ENCODE measurements at regions of chr13 and their contacts with region 1.

Region 1: DNA sequence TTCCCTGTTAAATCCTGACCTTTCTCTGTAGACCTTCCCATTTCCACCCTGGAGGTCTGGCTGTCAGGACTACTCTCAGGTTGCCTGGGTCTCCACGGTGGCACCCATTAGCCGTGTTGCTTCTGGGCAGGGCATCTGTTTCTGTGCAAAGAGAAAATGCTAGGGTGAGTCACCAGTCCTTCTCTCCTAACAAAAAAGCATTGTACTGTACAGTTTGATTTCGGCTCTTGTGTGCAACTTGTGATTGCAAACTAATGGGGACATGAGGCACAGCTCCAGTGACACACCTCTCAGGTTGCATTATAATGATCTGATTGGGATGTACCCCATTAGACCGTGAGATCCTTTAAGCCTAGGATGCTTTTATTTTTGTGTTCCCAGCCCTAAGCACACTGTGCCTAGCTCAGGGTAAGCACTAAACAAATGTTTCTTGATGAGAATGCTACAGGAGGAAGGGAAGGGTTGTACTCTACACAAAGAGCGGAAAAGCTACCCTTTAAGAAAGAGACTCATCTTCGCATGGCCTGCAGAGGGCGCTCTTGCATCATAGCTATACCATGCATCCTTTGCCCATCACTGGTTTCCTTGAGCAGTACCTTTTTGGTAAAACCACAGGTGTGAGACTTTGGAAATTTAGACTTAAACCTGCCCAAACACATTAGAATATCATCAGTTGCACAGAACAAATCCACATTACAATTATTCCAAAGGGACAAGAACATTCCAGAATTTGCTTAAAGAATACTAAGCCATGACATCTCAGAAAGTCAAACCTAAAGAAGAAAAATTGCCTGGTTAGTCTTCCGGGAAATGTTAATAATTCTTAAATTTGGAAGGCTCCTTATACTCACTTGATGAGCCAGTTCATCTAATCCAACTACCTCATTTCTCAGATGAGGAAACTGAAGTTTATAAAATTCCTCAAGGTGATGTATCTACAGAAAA is 20.3 kb upstream of the TRIM13 start:
- DNase-seq: peak; percentile 79
- H3K4me3 ChIP-seq: no peak overlapping the region
- H3K27ac ChIP-seq: no peak overlapping the region
- H3K4me1 ChIP-seq: no peaks in the 10 kb centered on the region
- H3K27me3 ChIP-seq: no peaks in the 10 kb centered on the region
- CTCF ChIP-seq: peak; percentile 84

Region 2: DNA sequence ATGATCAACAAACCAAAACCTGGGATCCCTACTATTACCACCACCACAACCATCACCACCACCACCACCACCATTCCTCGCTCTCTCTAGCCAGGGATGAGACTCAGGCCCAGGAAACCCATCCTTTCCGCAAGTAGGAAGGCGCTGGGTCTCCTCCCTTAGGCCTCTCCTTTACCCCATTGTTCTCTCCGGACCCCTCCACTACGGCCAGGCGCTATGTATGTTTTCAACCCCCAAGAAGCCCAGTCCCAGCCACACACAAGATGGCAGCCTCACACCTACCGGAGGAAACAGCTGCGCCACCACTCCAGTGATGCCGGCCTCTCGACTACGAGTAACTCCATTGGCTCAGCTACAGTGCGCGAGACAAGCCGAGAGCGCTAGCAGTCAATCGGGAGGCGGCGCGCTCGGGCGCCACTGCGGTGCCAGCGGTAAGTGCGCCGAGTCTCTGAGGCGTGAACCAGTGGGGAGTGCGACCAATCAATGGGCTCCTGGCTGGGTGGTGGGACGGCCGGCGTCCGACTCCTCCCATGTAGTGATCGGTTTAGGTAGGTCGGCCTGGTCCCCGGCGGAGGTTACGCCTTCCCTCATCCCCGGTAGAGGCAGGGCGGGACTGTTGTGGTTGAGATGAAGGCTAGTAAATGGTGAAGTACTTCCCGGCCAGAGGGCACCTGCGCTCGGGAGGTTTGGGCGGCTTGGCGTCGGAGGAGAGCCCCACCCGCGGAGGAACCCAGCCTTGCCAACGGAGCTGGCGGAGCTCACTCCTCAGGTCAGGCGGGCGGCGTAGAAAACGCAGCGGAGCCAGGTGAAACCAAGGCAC is 532.7 kb before region 1 on chr13 and contains the starts of genes CAB39L and SETDB2:
- intact Hi-C with region 1: no loop called
- DNase-seq: peak; percentile 99
- H3K4me3 ChIP-seq: peak within 1 kb of the TSS; percentile 63
- H3K27ac ChIP-seq: peak within 1 kb of the TSS; percentile 98
- H3K4me1 ChIP-seq: no peaks in the 10 kb centered on the region
- H3K27me3 ChIP-seq: no peaks in the 10 kb centered on the region
- CTCF ChIP-seq: peak; percentile 33
- total RNA-seq, gene CAB39L: 6.1 to 14.5 TPM
- total RNA-seq, gene SETDB2: 7.7 to 9.5 TPM

Region 3: GRCh38 chr13:50911937-50912795 is 935.6 kb after region 1 on chr13:
- intact Hi-C with region 1: loop called (anchors 5 kb)
- DNase-seq: peak; percentile 96
- H3K4me3 ChIP-seq: no peak overlapping the region
- H3K27ac ChIP-seq: peak overlapping the region; percentile 86
- H3K4me1 ChIP-seq: no peaks in the 10 kb centered on the region
- H3K27me3 ChIP-seq: no peaks in the 10 kb centered on the region
- CTCF ChIP-seq: peak; percentile 69

Region 4: DNA sequence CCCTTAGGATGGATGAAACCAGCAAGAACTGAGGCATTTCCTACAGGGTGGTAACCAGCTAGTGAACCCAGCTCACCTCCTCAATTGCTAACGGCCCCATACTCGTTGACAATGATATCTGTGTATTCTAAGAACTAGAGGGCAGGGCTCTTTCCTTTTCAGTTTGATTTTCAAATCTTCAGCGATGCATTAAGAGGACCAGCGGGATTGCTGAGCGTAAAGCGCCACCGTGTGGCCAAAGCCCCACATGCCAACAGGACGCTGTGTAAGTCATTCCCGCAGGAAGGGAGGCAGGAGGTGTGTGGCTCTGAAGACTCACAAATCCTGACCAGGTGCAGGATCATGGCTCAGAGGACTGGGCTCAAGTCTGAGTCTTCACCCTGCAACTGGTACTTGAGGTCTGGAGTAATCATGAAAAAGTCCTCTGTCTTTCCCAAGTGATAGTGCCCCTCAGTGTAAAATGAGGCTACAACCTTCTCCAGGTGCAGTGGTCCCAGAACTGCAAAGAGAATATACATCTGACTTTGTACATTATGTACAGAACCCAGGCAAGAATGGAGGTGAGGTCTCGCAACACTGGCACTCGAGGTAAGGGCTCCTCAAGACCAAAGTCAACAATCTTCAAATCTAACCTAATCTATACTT is 1093.5 kb after region 1 on chr13:
- intact Hi-C with region 1: loop called (anchors 5 kb)
- DNase-seq: peak; percentile 78
- H3K4me3 ChIP-seq: no peak overlapping the region
- H3K27ac ChIP-seq: no peak overlapping the region
- H3K4me1 ChIP-seq: no peaks in the 10 kb centered on the region
- H3K27me3 ChIP-seq: no peaks in the 10 kb centered on the region
- CTCF ChIP-seq: peak; percentile 95

Measured in colonic mucosa (tissue), 4 donors.